Motor neuron (in vitro differentiated cells): ENCODE measurements at regions of chr7 and their contacts with region 1.

Region 1: DNA sequence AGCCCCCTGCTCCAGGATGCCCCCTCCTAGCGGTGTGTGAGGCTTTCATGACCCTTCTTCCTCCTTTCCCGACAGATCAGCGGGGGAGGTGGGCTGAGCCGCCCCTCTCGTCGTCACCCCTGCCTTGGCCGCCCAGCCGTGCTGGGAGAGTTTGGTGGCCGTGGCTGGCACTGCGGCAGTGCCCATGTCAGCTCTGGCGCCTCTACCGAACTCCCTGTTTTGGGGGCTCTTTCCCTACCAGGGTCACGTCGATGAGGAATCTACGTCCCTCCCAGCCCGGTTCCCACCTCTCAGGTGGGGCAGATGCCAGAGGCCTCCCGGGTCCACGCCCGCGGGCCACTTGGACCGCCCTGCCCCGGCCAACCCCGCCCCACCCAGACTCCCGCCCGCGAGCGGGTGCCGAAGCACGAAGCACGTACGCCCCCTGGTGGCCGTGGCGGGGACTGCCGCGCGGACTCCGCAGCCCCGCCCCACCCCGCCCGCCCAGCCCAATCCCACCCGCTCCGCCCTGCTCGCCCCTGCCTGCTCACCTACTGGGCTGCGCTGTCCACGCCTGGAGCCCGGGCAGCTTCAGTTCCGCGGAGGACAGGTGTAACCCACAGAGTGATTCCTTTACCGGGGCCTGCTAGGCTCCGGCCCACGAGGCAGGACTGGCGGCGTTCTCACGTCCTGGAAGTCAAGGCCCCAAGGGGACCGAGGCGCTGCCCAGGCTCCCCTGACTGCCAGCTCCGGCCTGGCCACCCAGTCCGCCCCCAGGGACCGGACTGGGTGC is 127.1 kb downstream of the UBE2H start:
- ATAC-seq: peak; percentile 51 to 75 (median 70)
- H3K4me3 ChIP-seq: peak overlapping the region; percentile 35 to 54 (median 43)
- H3K27ac ChIP-seq: peak overlapping the region in 1 of 2 donors; percentile 49
- H3K4me1 ChIP-seq: peaks cover 0 to 5% of the 10 kb centered on the region in 2 donors

Region 2: DNA sequence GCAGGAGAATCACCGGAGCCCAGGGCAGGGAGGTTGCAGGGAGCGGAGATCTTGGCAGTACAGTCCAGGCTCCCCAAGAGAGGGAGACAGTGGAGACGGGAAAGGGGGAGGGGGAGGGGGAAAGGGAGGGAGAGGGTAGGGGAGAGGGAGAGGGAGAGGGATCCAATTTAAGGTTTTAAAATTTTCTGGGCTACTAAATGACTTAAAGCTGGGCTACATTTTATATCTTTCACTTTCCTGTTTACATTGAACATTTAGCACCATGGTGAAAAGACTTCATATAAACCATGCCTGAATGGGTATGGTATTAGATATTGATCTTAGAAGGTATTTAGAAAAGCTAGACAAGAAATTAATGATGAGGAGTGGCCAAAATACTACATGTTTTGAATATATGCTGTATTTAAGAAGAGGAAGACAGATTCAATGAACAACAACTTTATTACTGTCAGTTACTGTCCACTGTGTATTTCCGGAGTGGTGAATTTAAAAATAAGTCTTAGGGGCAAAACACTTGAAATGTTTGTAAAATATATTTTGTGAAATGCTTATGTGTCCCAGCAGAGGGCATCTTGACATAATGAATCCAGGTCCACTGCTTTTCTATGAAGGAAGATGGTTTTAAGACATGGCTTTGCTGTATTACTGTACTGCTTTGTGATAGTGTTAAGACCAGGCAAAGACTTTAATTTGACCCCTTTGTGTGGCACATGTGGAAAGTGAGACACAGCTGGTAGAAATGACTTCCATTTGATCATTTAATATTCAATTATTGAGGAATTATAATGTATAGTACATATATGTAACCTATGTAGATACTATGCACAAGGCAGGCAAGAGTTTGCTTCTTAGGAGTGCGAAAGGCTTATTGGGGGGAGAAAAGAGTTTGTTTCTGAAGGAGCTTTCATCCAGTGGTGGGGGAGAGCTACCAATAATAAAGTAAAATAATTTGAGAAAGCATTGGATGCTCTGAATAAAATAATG is 161.4 kb before region 1 on chr7:
- in situ Hi-C with region 1: loop called in 3 of 9 experiments (anchors 10 kb)
- ATAC-seq: peak in 5 of 8 experiments; percentile 36 to 66 (median 50)
- H3K4me3 ChIP-seq: no peak overlapping the region
- H3K27ac ChIP-seq: no peak overlapping the region
- H3K4me1 ChIP-seq: no peaks in the 10 kb centered on the region

Region 3: DNA sequence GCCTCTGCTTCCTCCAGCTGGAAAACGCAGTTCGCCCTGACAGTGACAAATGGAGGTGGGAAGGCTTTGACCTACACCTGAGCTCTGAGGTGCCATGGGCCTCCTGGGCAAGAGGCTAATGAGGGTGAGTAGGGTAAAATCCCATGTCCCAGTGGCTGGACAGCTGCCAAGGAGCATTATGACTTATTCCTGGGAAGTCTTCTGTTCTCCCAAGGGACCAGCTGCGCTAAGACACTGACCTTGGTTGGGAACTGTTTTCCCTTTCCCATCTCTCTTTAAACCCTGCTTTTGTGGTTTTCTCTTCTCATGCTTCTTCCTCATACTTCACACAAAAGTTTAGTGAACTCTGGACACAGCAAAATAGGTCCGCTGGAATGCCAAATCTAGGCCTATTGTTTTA is 770.3 kb after region 1 on chr7:
- in situ Hi-C with region 1: no loop called
- ATAC-seq: no peak
- H3K4me3 ChIP-seq: no peak overlapping the region
- H3K27ac ChIP-seq: no peak overlapping the region
- H3K4me1 ChIP-seq: no peaks in the 10 kb centered on the region